Naive thymus-derived CD4-positive, alpha-beta T cell (primary cell): ENCODE measurements at regions of chr11 and their contacts with region 1.

Region 1: GRCh38 chr11:20243974-20244373 is 83.7 kb upstream of the DBX1 start:
- DNase-seq: no peak
- ATAC-seq: no peak
- H3K4me3 ChIP-seq: no peak overlapping the region
- H3K4me3 Mint-ChIP-seq: no peak overlapping the region
- H3K27ac ChIP-seq: no peak overlapping the region
- H3K27ac Mint-ChIP-seq: no peak overlapping the region
- H3K4me1 ChIP-seq: no peaks in the 10 kb centered on the region
- H3K4me1 Mint-ChIP-seq: no peaks in the 10 kb centered on the region
- H3K27me3 ChIP-seq: no peaks in the 10 kb centered on the region
- H3K27me3 Mint-ChIP-seq: peaks cover 5 to 41% (median 37%) of the 10 kb centered on the region in 5 donors

Region 2: DNA sequence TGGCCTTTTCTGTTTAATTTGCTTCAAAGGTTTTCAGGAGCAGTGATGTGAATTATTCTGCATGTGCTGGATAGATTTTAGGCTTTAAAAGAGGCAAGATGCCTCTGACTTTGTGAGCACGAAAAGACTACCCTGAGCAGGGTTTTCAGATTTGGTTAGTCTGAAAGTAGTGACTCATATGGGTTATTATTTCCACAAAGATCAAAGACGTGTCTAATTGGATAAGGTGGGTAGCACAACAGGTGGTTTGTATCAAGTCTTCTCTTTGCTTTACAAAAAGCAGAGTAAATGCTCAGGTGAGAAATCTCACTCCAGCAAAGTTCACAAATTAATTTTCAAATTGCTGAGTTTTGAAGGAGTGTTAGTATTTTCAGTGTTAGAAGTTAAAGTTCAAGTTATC is 46.1 kb before region 1 on chr11:
- CTCF ChIA-PET with region 1: no interaction called
- POLR2A ChIA-PET with region 1: no interaction called
- intact Hi-C with region 1: no loop called
- DNase-seq: no peak
- ATAC-seq: no peak
- H3K4me3 ChIP-seq: no peak overlapping the region
- H3K4me3 Mint-ChIP-seq: no peak overlapping the region
- H3K27ac ChIP-seq: no peak overlapping the region
- H3K27ac Mint-ChIP-seq: no peak overlapping the region
- H3K4me1 ChIP-seq: no peaks in the 10 kb centered on the region
- H3K4me1 Mint-ChIP-seq: peaks cover 0 to 5% (median 0%) of the 10 kb centered on the region in 7 donors
- H3K27me3 ChIP-seq: no peaks in the 10 kb centered on the region
- H3K27me3 Mint-ChIP-seq: peaks cover 32 to 49% (median 41%) of the 10 kb centered on the region in 5 donors

Region 3: DNA sequence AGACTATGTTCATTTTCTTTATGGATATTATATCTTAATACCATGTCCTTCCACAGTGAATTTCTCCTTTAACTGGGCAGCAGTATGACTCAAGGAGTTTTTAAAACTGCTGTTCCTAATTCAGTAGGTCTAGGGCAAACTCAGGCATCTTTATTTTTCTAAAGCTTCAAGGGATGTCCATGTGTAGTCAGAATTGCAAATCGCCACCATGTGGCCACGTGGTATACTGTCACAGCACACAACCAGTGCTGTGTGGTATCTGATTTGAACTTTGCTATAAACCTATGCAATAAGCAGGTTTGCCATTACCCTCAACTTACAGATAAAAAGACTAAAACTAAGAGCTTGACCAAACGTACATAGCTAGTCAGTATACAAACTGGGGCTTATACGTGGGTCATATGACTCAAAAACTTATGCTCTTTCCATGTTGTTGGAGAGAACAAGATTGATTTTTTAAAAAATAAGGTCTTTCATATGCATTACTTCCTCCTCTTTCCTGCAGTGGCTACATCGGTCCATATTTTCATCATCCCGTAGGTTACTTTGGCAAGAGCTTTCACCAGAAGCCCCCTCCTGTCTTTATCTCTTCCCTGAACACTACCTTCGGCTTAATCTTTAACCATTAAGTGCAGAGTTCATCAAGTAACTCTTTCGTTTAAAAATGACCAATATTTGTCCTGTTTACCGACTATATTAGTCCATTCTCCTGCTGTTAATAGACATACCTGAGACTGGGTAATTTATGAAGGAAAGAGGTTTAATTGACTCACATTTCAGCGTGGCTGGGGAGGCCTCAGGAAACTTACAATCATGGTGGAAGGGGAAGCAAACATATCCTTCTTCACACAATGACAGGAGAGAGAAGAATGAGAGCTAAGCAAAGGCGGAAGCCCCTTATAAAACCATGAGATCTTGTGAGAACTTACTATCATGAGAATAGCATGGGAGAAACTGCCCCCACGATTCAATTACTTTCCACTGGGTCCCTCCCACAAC is 111.5 kb after region 1 on chr11:
- CTCF ChIA-PET with region 1: no interaction called
- POLR2A ChIA-PET with region 1: no interaction called
- intact Hi-C with region 1: loop called in 1 of 2 experiments (anchors 5 kb)
- DNase-seq: peak in 6 of 9 donors; percentile 14 to 38 (median 23)
- ATAC-seq: peak; percentile 62
- H3K4me3 ChIP-seq: no peak overlapping the region
- H3K4me3 Mint-ChIP-seq: no peak overlapping the region
- H3K27ac ChIP-seq: no peak overlapping the region
- H3K27ac Mint-ChIP-seq: no peak overlapping the region
- H3K4me1 ChIP-seq: peaks cover 4 to 5% of the 10 kb centered on the region in 2 donors
- H3K4me1 Mint-ChIP-seq: peaks cover 8 to 30% (median 14%) of the 10 kb centered on the region in 7 donors
- H3K27me3 ChIP-seq: no peaks in the 10 kb centered on the region
- H3K27me3 Mint-ChIP-seq: peaks cover 0 to 9% (median 0%) of the 10 kb centered on the region in 5 donors